Naive thymus-derived CD4-positive, alpha-beta T cell (primary cell): ENCODE measurements at regions of chr11 and their contacts with region 1.

Region 1: DNA sequence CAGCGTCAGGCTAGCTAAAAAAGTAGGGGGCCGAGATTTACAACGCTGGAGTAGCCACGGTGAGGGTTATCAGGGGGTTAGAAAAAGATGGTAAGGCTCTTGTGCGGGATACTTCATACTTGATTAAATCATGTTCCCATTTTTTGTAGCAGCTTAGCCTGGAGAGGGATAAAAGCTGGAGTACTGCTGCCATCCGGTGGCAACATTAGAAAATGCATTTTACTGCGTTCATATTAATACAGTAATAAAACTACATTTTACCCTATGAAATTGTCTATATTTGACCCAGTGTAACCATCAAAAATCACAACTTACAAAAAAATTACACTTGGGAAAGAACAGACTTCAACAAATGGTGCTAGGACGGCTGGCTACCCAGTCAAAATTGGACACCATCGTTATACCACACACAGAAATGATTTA is 17.3 kb downstream of the RPUSD4 start:
- DNase-seq: peak in 5 of 9 donors; percentile 22 to 43 (median 29)
- ATAC-seq: no peak
- H3K4me3 ChIP-seq: no peak overlapping the region
- H3K4me3 Mint-ChIP-seq: no peak overlapping the region
- H3K27ac ChIP-seq: no peak overlapping the region
- H3K27ac Mint-ChIP-seq: peak overlapping the region in 1 of 9 donors; percentile 52
- H3K4me1 ChIP-seq: no peaks in the 10 kb centered on the region
- H3K4me1 Mint-ChIP-seq: peaks cover 0 to 2% (median 0%) of the 10 kb centered on the region in 7 donors
- H3K27me3 ChIP-seq: no peaks in the 10 kb centered on the region
- H3K27me3 Mint-ChIP-seq: no peaks in the 10 kb centered on the region

Region 2: DNA sequence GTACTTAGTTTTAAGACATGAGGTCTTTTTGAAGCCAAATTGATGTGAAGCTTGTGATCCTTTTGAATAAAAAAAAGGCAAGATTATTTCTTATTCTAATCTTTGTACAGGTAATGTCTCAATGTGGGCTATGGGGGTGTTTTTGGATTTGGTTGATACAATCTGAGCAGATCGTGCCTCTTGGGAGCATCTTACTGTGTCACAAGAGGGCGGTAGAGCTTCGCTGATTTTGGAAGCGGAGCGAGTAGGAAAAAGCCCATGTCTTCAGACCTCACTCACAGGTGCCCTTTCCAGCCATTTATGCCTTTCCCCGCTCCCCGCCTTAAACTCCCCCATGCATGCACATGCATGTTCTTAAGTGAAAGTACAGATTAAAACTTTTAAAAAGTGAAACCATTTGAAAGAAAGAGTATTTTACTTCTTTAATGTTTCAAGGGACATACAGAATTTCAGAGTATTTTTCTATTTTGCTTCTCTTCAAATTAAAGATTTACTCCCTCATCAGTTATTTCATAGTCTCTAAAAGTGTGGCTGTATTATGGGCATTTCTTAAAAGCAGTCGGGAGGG is 271.0 kb before region 1 on chr11:
- CTCF ChIA-PET with region 1: interaction called, 30 read pairs
- POLR2A ChIA-PET with region 1: no interaction called
- intact Hi-C with region 1: loop called (anchors 1 kb)
- DNase-seq: peak in 8 of 9 donors; percentile 39 to 65 (median 60)
- ATAC-seq: peak; percentile 71
- H3K4me3 ChIP-seq: no peak overlapping the region
- H3K4me3 Mint-ChIP-seq: no peak overlapping the region
- H3K27ac ChIP-seq: no peak overlapping the region
- H3K27ac Mint-ChIP-seq: no peak overlapping the region
- H3K4me1 ChIP-seq: no peaks in the 10 kb centered on the region
- H3K4me1 Mint-ChIP-seq: peaks cover 0 to 4% (median 0%) of the 10 kb centered on the region in 7 donors
- H3K27me3 ChIP-seq: no peaks in the 10 kb centered on the region
- H3K27me3 Mint-ChIP-seq: peaks cover 14 to 35% (median 19%) of the 10 kb centered on the region in 5 donors

Region 3: DNA sequence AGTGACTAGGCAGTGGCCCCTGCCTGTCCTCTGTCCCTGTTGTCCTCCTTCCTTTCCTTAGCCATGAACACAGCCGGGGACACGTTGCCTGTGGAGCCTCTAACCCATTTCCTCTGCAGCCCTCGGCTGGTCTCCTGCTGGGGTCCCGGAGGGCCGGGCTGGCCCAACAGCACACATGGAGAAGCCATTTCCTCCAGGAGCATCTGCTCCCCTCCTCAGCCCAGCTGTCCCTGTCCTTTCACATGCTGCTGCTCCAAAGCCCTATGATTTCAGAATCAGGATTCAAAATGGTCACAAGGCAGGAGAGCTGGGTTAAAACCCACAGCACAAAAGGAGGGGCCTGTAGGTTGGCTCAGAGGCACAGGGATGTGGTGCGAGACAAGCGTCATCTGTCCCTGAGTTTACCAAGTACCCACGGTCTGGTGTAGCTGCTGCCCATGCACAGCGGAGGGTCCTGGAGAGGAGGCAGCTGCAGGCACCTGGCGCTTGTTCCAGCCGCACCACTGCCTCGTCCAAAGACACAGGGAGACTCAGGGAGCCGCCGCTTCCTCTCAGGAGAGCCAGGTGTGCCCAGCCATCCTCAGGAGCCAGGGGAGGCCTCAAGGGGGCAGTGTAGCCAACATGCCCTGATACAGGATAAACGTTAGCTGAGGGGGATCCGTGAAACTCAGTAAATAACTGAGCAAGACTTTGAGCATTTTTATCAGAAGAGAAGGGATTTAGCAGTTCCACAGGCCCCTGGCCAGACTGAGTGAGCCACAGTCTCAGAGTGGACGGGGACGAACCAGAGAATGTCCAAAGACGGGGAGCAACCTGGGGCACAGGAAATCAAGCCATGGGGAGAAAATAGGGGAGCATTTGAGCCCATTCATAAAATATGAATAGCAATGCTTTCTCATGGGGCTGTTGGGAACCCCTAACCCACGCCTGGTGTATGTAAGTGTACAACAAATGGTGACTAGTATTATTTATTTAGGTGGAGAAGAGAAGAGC is 252.2 kb before region 1 on chr11:
- CTCF ChIA-PET with region 1: interaction called, 30 read pairs
- POLR2A ChIA-PET with region 1: no interaction called
- intact Hi-C with region 1: loop called in 1 of 2 experiments (anchors 1 kb)
- DNase-seq: peak in 7 of 9 donors; percentile 8 to 49 (median 37)
- ATAC-seq: peak; percentile 65
- H3K4me3 ChIP-seq: no peak overlapping the region
- H3K4me3 Mint-ChIP-seq: peak overlapping the region in 6 of 10 donors; percentile 28 to 63 (median 40)
- H3K27ac ChIP-seq: no peak overlapping the region
- H3K27ac Mint-ChIP-seq: peak overlapping the region in 1 of 9 donors; percentile 18
- H3K4me1 ChIP-seq: no peaks in the 10 kb centered on the region
- H3K4me1 Mint-ChIP-seq: peaks cover 7 to 21% (median 16%) of the 10 kb centered on the region in 7 donors
- H3K27me3 ChIP-seq: no peaks in the 10 kb centered on the region
- H3K27me3 Mint-ChIP-seq: no peaks in the 10 kb centered on the region

Region 4: DNA sequence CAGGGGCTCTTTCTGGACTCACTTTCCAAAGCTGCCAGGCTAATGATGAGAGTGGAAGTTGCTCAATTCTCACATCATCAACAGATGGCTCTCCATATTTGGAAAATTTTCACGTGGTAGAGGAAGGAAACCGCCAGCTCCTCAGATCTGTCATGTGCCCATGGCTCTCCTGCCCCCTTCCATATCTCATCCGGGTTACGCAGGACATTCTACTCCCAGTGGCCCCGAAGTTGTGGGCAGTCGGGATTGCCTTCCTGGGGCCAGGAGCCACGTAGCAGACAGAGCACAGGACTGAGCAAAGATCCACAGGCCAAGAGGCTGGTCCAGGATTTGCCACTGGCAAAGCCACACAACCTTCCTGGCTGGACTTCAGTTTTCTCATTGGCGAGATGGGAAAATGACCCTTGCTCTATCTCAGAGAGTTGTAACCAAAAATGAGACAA is 21.5 kb before region 1 on chr11:
- CTCF ChIA-PET with region 1: no interaction called
- POLR2A ChIA-PET with region 1: no interaction called
- intact Hi-C with region 1: no loop called
- DNase-seq: no peak
- ATAC-seq: no peak
- H3K4me3 ChIP-seq: no peak overlapping the region
- H3K4me3 Mint-ChIP-seq: no peak overlapping the region
- H3K27ac ChIP-seq: no peak overlapping the region
- H3K27ac Mint-ChIP-seq: peak overlapping the region in 1 of 9 donors; percentile 36
- H3K4me1 ChIP-seq: no peaks in the 10 kb centered on the region
- H3K4me1 Mint-ChIP-seq: peaks cover 0 to 3% (median 0%) of the 10 kb centered on the region in 7 donors
- H3K27me3 ChIP-seq: no peaks in the 10 kb centered on the region
- H3K27me3 Mint-ChIP-seq: peaks cover 0 to 20% (median 4%) of the 10 kb centered on the region in 5 donors

Region 5: GRCh38 chr11:126231725-126232459 is 37.8 kb after region 1 on chr11:
- CTCF ChIA-PET with region 1: no interaction called
- POLR2A ChIA-PET with region 1: no interaction called
- intact Hi-C with region 1: no loop called
- DNase-seq: no peak
- ATAC-seq: no peak
- H3K4me3 ChIP-seq: no peak overlapping the region
- H3K4me3 Mint-ChIP-seq: no peak overlapping the region
- H3K27ac ChIP-seq: no peak overlapping the region
- H3K27ac Mint-ChIP-seq: no peak overlapping the region
- H3K4me1 ChIP-seq: no peaks in the 10 kb centered on the region
- H3K4me1 Mint-ChIP-seq: peaks cover 0 to 6% (median 4%) of the 10 kb centered on the region in 7 donors
- H3K27me3 ChIP-seq: no peaks in the 10 kb centered on the region
- H3K27me3 Mint-ChIP-seq: no peaks in the 10 kb centered on the region

Region 6: GRCh38 chr11:126375726-126376125 is 181.6 kb after region 1 on chr11:
- CTCF ChIA-PET with region 1: no interaction called
- POLR2A ChIA-PET with region 1: no interaction called
- intact Hi-C with region 1: no loop called
- DNase-seq: no peak
- ATAC-seq: no peak
- H3K4me3 ChIP-seq: no peak overlapping the region
- H3K4me3 Mint-ChIP-seq: no peak overlapping the region
- H3K27ac ChIP-seq: no peak overlapping the region
- H3K27ac Mint-ChIP-seq: no peak overlapping the region
- H3K4me1 ChIP-seq: no peaks in the 10 kb centered on the region
- H3K4me1 Mint-ChIP-seq: peaks cover 0 to 7% (median 0%) of the 10 kb centered on the region in 7 donors
- H3K27me3 ChIP-seq: no peaks in the 10 kb centered on the region
- H3K27me3 Mint-ChIP-seq: no peaks in the 10 kb centered on the region